Heart left ventricle (tissue), 16 donors: ENCODE measurements at regions of chrX and their contacts with region 1.

Region 1: GRCh38 chrX:100512471-100512870 is 72.3 kb upstream of the TNMD start:
- DNase-seq: no peak
- ATAC-seq: no peak
- H3K4me3 ChIP-seq: no peak overlapping the region
- H3K27ac ChIP-seq: no peak overlapping the region
- H3K4me1 ChIP-seq: no peaks in the 10 kb centered on the region
- H3K27me3 ChIP-seq: no peaks in the 10 kb centered on the region
- CTCF ChIP-seq: peak; percentile 42 to 76 (median 60)
- POLR2A ChIP-seq: no peak

Region 2: GRCh38 chrX:100274916-100275315 is 237.6 kb before region 1 on chrX:
- intact Hi-C with region 1: no loop called
- DNase-seq: no peak
- ATAC-seq: no peak
- H3K4me3 ChIP-seq: no peak overlapping the region
- H3K27ac ChIP-seq: no peak overlapping the region
- H3K4me1 ChIP-seq: no peaks in the 10 kb centered on the region
- H3K27me3 ChIP-seq: no peaks in the 10 kb centered on the region
- CTCF ChIP-seq: no peak
- POLR2A ChIP-seq: no peak

Region 3: GRCh38 chrX:100407784-100408712 is 104.4 kb before region 1 on chrX:
- intact Hi-C with region 1: no loop called
- DNase-seq: no peak
- ATAC-seq: no peak
- H3K4me3 ChIP-seq: peak overlapping the region in 8 of 12 donors; percentile 7 to 63 (median 54)
- H3K27ac ChIP-seq: no peak overlapping the region
- H3K4me1 ChIP-seq: peaks cover 0 to 16% (median 0%) of the 10 kb centered on the region in 12 donors
- H3K27me3 ChIP-seq: peaks cover 0 to 98% (median 13%) of the 10 kb centered on the region in 9 donors
- CTCF ChIP-seq: no peak
- POLR2A ChIP-seq: no peak

Region 4: GRCh38 chrX:100609591-100609990 is 97.1 kb after region 1 on chrX:
- intact Hi-C with region 1: loop called in 2 of 10 experiments (anchors 10 kb)
- DNase-seq: no peak
- ATAC-seq: no peak
- H3K4me3 ChIP-seq: no peak overlapping the region
- H3K27ac ChIP-seq: no peak overlapping the region
- H3K4me1 ChIP-seq: no peaks in the 10 kb centered on the region
- H3K27me3 ChIP-seq: peaks cover 0 to 59% (median 0%) of the 10 kb centered on the region in 9 donors
- CTCF ChIP-seq: peak in 6 of 12 donors; percentile 5 to 41 (median 24)
- POLR2A ChIP-seq: no peak

Region 5: GRCh38 chrX:100636321-100636991 is 124.0 kb after region 1 on chrX and contains the start of gene TSPAN6:
- intact Hi-C with region 1: loop called in 2 of 10 experiments (anchors 10 kb)
- DNase-seq: peak; percentile 71 to 85 (median 77)
- ATAC-seq: peak; percentile 97 to 99 (median 98)
- H3K4me3 ChIP-seq: peak within 1 kb of the TSS; percentile 46 to 82 (median 63)
- H3K27ac ChIP-seq: peak within 1 kb of the TSS in 9 of 12 donors; percentile 39 to 74 (median 62)
- H3K4me1 ChIP-seq: peaks cover 0 to 4% (median 0%) of the 10 kb centered on the region in 12 donors
- H3K27me3 ChIP-seq: peaks cover 0 to 45% (median 0%) of the 10 kb centered on the region in 9 donors
- CTCF ChIP-seq: peak; percentile 16 to 64 (median 48)
- POLR2A ChIP-seq: no peak
- total RNA-seq, gene TSPAN6: 3.2 to 9.0 (median 6.0) TPM

Region 6: GRCh38 chrX:100768679-100769338 is 256.3 kb after region 1 on chrX:
- intact Hi-C with region 1: loop called in 3 of 10 experiments (anchors 5 to 10 kb)
- DNase-seq: peak; percentile 52 to 80 (median 66)
- ATAC-seq: peak in 2 of 4 donors; percentile 47 to 70
- H3K4me3 ChIP-seq: no peak overlapping the region
- H3K27ac ChIP-seq: no peak overlapping the region
- H3K4me1 ChIP-seq: no peaks in the 10 kb centered on the region
- H3K27me3 ChIP-seq: peaks cover 0 to 22% (median 0%) of the 10 kb centered on the region in 9 donors
- CTCF ChIP-seq: peak; percentile 80 to 99 (median 91)
- POLR2A ChIP-seq: no peak